Activated T-helper 2 cell treated with anti-CD3 and anti-CD28 coated beads, Interferon-gamma antibody, Interleukin-2, Interleukin-4, amounts not matched to agents 10 μg/mL and 5 μg/mL and 100 μg/mL, durations not matched to agents 14 hours and 24 hours and 36 hours (primary cell): ENCODE measurements at regions of chr12 and their contacts with region 1.

Region 1: GRCh38 chr12:91637789-91638624 is 455.4 kb upstream of the DCN start:
- DNase-seq: no peak
- H3K4me3 Mint-ChIP-seq: no peak overlapping the region
- H3K27ac Mint-ChIP-seq: no peak overlapping the region
- H3K4me1 Mint-ChIP-seq: peaks cover 5% of the 10 kb centered on the region
- H3K27me3 Mint-ChIP-seq: peaks cover 5% of the 10 kb centered on the region

Region 2: GRCh38 chr12:91287753-91288152 is 350.3 kb before region 1 on chr12:
- intact Hi-C with region 1: no loop called
- DNase-seq: no peak
- H3K4me3 Mint-ChIP-seq: no peak overlapping the region
- H3K27ac Mint-ChIP-seq: no peak overlapping the region
- H3K4me1 Mint-ChIP-seq: no peaks in the 10 kb centered on the region
- H3K27me3 Mint-ChIP-seq: no peaks in the 10 kb centered on the region

Region 3: DNA sequence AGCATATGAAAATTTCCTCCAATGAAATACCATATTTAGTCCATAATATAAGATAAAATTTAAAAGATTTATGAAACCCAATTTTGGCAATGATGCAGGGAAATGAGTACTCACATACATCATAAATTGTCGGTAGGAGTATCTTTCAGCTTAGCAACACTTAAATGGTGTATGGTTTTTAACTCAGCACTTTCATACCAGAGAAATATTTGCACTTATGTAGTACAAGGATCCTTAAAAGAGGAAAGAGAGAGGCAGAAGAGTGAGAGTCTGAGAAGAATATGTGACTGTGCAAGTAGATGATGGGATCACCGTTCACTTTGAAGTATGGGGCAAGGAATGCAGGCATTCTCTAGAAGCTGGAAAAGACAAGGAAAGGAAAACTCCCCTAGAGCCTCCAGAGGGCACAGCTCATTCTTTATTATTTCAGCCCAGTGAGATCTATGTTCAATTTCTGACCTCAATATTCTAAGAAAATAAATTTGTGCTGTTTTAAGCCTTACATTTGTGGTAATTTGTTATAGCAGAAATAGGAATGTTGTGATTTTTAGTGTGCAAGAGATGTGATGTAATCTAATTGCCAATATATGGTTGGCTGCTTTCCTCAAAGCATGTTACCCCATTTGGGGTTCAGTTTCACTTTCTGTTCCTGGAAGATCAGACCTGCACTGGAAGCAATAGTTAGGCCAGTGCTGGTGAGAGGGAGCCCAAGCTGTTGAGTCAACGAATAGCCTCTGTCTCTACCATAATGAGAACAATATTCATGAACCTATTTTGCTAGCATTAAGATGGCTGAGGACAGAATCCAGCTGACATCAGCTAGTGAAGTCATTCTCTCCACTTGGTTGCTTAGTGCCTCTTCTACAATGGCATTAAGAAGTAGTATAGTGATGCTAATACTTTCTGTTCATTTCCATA is 75.8 kb before region 1 on chr12:
- intact Hi-C with region 1: loop called (anchors 2 kb)
- DNase-seq: no peak
- H3K4me3 Mint-ChIP-seq: no peak overlapping the region
- H3K27ac Mint-ChIP-seq: no peak overlapping the region
- H3K4me1 Mint-ChIP-seq: peaks cover 35% of the 10 kb centered on the region
- H3K27me3 Mint-ChIP-seq: no peaks in the 10 kb centered on the region